Left lung (tissue), 14 donors: ENCODE measurements at regions of chr18 and their contacts with region 1.

Region 1: GRCh38 chr18:74342416-74343043 is 26.9 kb downstream of the C18orf63 start:
- DNase-seq: peak in 2 of 4 donors; percentile 54 to 78
- ATAC-seq: peak; percentile 65
- H3K4me3 ChIP-seq: no peak overlapping the region
- H3K27ac ChIP-seq: no peak overlapping the region
- H3K4me1 ChIP-seq: no peaks in the 10 kb centered on the region
- H3K27me3 ChIP-seq: no peaks in the 10 kb centered on the region
- CTCF ChIP-seq: peak; percentile 61 to 70

Region 2: DNA sequence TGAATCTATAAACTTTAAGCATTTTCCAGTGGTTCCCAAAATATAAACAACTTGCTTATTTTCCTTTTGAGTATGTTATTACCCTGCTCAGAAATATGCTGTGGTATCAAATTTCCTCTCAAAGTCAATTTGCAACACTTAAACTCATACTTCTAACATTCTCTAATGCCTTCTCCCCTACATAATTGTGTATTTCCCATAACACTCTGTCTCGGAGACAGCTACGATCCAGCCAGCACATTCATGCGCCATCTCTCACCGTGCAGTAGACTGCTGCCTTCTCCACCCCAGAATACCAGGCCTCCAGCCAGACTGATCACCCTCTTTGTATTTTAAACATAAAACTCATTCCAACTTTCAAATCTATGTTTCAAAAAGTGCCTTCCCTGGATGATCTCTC is 152.4 kb before region 1 on chr18:
- intact Hi-C with region 1: loop called (anchors 5 to 10 kb)
- DNase-seq: peak in 1 of 4 donors; percentile 16
- ATAC-seq: peak; percentile 73
- H3K4me3 ChIP-seq: no peak overlapping the region
- H3K27ac ChIP-seq: no peak overlapping the region
- H3K4me1 ChIP-seq: no peaks in the 10 kb centered on the region
- H3K27me3 ChIP-seq: peaks cover 0 to 14% of the 10 kb centered on the region in 2 donors
- CTCF ChIP-seq: no peak

Region 3: GRCh38 chr18:74196220-74197119 is 146.1 kb before region 1 on chr18:
- intact Hi-C with region 1: loop called (anchors 5 to 10 kb)
- DNase-seq: peak in 2 of 4 donors; percentile 67 to 85
- ATAC-seq: peak; percentile 83
- H3K4me3 ChIP-seq: no peak overlapping the region
- H3K27ac ChIP-seq: peak overlapping the region; percentile 57 to 72
- H3K4me1 ChIP-seq: peaks cover 0 to 13% of the 10 kb centered on the region in 2 donors
- H3K27me3 ChIP-seq: peaks cover 0 to 14% of the 10 kb centered on the region in 2 donors
- CTCF ChIP-seq: peak; percentile 77 to 85